Activated T-helper 2 cell treated with anti-CD3 and anti-CD28 coated beads, Interferon-gamma antibody, Interleukin-2, Interleukin-4, amounts not matched to agents 10 μg/mL and 5 μg/mL and 100 μg/mL, durations not matched to agents 14 hours and 24 hours and 36 hours (primary cell): ENCODE measurements at regions of chr16 and their contacts with region 1.

Region 1: DNA sequence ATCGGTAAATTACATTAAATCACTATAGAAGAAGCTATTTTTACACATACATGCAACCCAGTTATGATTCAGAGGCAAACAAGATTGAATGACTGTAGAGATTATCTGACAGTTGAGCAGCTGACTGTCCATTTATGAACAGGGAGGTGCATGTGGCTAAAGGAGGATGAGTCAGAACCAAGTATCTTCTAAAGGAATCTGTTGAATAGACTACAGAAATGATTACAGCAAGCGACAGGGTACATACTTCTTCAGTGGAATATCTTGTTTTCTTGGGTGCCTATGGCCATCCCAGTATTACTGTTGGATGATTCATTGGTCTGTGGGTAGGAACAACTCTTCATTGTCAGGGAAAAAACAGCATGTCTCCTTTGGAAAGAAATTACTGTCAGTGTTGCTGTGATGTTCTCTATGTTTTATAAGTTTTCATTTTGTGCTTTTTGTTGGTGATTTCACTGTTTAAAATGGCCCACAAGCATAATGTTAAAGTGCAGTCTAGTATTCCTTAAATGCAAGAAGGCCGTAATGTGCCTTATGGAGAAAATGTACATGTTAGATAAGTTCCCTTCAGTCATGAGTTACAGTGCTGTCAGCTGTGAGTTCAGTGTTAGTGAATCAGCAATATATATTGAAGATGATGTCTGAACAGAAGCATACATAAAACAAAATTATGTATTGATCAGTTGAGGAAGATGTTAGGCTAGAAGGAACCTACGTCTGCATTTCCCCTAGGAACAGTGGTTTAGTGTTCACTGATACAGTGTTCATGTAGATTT is 27.0 kb downstream of the CBFB start:
- DNase-seq: no peak
- H3K4me3 Mint-ChIP-seq: peak overlapping the region; percentile 68
- H3K27ac Mint-ChIP-seq: peak overlapping the region; percentile 97
- H3K4me1 Mint-ChIP-seq: peaks cover 56% of the 10 kb centered on the region
- H3K27me3 Mint-ChIP-seq: no peaks in the 10 kb centered on the region

Region 2: GRCh38 chr16:66977341-66978113 is 78.4 kb before region 1 on chr16:
- intact Hi-C with region 1: no loop called
- DNase-seq: peak; percentile 83
- H3K4me3 Mint-ChIP-seq: no peak overlapping the region
- H3K27ac Mint-ChIP-seq: peak overlapping the region; percentile 68
- H3K4me1 Mint-ChIP-seq: peaks cover 50% of the 10 kb centered on the region
- H3K27me3 Mint-ChIP-seq: no peaks in the 10 kb centered on the region

Region 3: GRCh38 chr16:66988197-66988788 is 67.6 kb before region 1 on chr16 and contains the start of gene CES4A:
- intact Hi-C with region 1: loop called (anchors 1 kb)
- DNase-seq: no peak
- H3K4me3 Mint-ChIP-seq: peak within 1 kb of the TSS; percentile 61
- H3K27ac Mint-ChIP-seq: peak within 1 kb of the TSS; percentile 88
- H3K4me1 Mint-ChIP-seq: peaks cover 40% of the 10 kb centered on the region
- H3K27me3 Mint-ChIP-seq: no peaks in the 10 kb centered on the region
- total RNA-seq, gene CES4A: 29.8 and 30.1 TPM in 2 replicates

Region 4: DNA sequence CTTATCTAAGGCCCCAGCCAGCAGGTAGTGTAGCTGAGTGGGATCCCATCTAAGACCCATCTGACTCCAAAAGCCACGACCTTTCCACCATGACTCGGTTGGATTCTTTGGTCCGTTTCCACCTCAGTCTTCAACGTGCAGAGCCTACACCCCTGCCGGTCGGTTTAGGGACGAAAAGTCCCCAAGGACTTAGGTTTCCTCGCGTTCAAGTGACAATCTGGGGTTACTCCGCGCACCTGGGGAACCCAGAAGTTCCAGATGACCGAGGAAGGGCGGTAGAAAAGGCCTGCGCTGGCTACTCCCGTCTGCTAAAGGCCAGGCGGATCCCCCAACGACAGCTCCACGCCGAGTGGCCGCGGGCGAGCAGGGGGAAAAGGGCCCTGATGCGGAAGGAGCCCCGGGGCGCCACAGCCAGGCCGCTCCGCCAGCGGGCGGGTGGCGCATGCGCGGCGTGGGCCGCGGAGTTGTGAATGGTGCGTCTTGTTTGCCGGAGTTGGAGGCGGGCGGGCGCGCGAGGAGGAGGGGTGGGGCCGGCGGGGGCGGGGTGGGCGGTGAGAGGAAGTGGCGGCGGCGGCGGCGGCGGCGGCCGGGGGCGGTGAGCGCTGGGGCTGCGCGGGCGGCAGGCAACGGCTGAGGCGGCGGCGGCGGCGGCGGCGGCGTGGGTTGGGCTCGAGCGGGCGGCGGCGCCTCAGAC is 27.2 kb before region 1 on chr16 and contains the start of gene CBFB:
- intact Hi-C with region 1: loop called (anchors 1 kb)
- DNase-seq: peak; percentile 95
- H3K4me3 Mint-ChIP-seq: peak within 1 kb of the TSS; percentile 92
- H3K27ac Mint-ChIP-seq: peak within 1 kb of the TSS; percentile 92
- H3K4me1 Mint-ChIP-seq: peaks cover 46% of the 10 kb centered on the region
- H3K27me3 Mint-ChIP-seq: no peaks in the 10 kb centered on the region
- total RNA-seq, gene CBFB: 156 and 159 TPM in 2 replicates

Region 5: GRCh38 chr16:67039260-67040020 is 16.5 kb before region 1 on chr16:
- intact Hi-C with region 1: loop called (anchors 2 kb)
- DNase-seq: no peak
- H3K4me3 Mint-ChIP-seq: no peak overlapping the region
- H3K27ac Mint-ChIP-seq: no peak overlapping the region
- H3K4me1 Mint-ChIP-seq: peaks cover 53% of the 10 kb centered on the region
- H3K27me3 Mint-ChIP-seq: no peaks in the 10 kb centered on the region

Region 6: GRCh38 chr16:67071476-67072048 is 15.7 kb after region 1 on chr16:
- intact Hi-C with region 1: no loop called
- DNase-seq: no peak
- H3K4me3 Mint-ChIP-seq: no peak overlapping the region
- H3K27ac Mint-ChIP-seq: no peak overlapping the region
- H3K4me1 Mint-ChIP-seq: peaks cover 4% of the 10 kb centered on the region
- H3K27me3 Mint-ChIP-seq: no peaks in the 10 kb centered on the region

Region 7: GRCh38 chr16:67104061-67104460 is 48.2 kb after region 1 on chr16:
- intact Hi-C with region 1: loop called (anchors 5 kb)
- DNase-seq: no peak
- H3K4me3 Mint-ChIP-seq: no peak overlapping the region
- H3K27ac Mint-ChIP-seq: no peak overlapping the region
- H3K4me1 Mint-ChIP-seq: peaks cover 7% of the 10 kb centered on the region
- H3K27me3 Mint-ChIP-seq: no peaks in the 10 kb centered on the region

Region 8: GRCh38 chr16:67159593-67160406 is 103.9 kb after region 1 on chr16 and contains the starts of genes FBXL8 and TRADD:
- intact Hi-C with region 1: no loop called
- DNase-seq: peak; percentile 79
- H3K4me3 Mint-ChIP-seq: peak within 1 kb of the TSS; percentile 91
- H3K27ac Mint-ChIP-seq: peak within 1 kb of the TSS; percentile 85
- H3K4me1 Mint-ChIP-seq: peaks cover 44% of the 10 kb centered on the region
- H3K27me3 Mint-ChIP-seq: peaks cover 8% of the 10 kb centered on the region
- total RNA-seq, gene FBXL8: 26.4 and 26.7 TPM in 2 replicates
- total RNA-seq, gene TRADD: 35.0 and 38.3 TPM in 2 replicates

Region 9: DNA sequence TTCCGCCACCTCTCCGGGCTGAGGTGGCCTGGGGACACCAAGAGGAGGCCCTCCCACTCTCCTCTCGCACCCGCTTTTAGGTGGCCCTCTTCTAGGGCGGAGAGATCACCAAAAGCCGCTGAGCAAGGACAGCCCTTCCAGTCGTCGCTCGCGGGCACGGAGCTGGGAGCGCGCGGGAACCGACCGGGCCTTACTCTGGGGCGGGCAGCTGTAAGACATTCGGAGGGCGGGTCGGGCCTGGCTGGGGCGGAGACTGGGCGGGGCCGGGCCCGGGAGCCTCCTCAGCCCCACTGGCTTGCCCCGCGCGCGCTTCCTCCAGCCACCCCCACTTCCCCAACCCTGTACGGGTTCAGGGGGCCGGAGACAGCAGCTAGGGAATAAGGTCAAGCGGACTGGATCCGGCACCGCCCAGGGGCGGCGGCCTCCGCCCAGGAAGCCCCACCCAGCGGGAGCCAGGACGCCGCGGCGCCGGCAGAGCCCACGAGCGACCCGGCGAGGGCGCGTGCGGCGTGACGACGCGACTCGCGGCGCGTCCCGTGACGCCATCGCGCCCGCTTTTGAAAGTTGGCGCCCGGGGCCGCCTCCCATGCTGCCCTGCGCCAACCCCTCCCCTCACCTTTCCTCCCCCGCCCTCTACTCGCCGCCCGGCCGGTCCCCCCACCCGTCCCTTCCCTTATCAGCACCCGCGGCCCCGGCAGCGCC is 506.1 kb after region 1 on chr16:
- intact Hi-C with region 1: loop called (anchors 5 kb)
- DNase-seq: peak; percentile 99
- H3K4me3 Mint-ChIP-seq: peak overlapping the region; percentile 83
- H3K27ac Mint-ChIP-seq: peak overlapping the region; percentile 90
- H3K4me1 Mint-ChIP-seq: peaks cover 32% of the 10 kb centered on the region
- H3K27me3 Mint-ChIP-seq: no peaks in the 10 kb centered on the region